ENCODE measurements at regions of chr22 and their contacts with region 1.

Region 1: DNA sequence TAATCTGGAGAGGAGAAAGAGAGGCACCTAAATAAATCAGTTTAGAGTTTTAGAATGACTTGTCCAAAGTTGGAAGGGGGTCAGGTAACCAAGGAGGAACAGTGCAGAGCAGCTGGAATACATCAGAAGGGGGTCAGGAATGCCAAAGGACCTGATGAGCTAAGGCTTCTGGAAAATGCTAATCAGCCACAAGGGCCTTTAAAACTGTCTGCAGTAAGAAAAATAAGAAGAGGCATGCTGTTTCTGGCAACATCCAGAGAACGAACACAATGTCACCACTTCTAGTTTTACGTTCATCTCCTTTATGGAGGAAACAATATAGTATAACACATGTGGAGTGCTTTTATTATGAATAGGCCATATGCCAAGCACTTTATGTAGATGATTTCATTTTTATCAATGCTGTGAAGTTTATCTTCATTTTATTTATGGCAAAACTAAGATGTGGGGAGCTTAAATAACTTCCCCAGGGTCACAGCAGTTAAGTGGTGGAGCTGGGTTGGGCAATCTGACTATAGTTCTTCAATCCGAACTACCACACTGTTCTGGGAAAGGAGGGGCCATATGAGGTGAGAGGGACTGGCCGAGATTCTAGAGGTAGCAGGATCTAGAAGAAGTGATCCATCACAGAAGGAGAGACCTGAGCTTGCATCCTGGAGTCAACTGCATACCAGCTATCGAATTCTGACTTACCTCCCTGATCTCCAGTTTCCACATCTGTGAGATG is 22.6 kb downstream of the ACO2 start:
- DNase-seq: no peak
- H3K4me3 ChIP-seq: no peak overlapping the region
- H3K27ac ChIP-seq: no peak overlapping the region
- H3K4me1 ChIP-seq: peaks cover 4 to 21% (median 14%) of the 10 kb centered on the region in 4 experiments; a peak in 6 of 7 replicates
- H3K27me3 ChIP-seq: no peaks in the 10 kb centered on the region
- CTCF ChIP-seq: no peak
- EP300 ChIP-seq: no peak
- POLR2A ChIP-seq: no peak
- RAD21 ChIP-seq: no peak

Region 2: DNA sequence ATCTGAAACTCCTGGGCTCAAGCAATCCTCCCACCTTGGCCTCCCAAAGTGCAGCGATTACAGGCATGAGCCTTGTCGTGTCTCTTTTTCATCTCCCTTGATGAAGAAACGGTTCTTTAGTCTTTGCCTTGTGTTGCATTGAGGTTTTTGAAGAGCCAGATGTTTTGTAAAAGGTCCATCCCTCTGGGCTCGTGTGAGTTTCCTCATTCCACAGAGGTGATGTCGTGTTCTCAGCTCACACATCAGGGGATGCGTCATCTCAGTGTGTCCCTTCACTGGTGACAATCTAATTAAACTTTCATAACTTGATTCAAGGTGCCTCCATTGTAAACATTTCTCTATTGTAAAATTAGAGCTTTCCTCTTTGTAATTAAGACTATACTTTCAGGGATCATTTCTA is 139.5 kb before region 1 on chr22:
- CTCF ChIA-PET with region 1: no interaction called
- POLR2A ChIA-PET with region 1: no interaction called
- DNase-seq: no peak
- H3K4me3 ChIP-seq: no peak overlapping the region
- H3K27ac ChIP-seq: no peak overlapping the region
- H3K4me1 ChIP-seq: no peaks in the 10 kb centered on the region
- H3K27me3 ChIP-seq: no peaks in the 10 kb centered on the region
- CTCF ChIP-seq: no peak
- EP300 ChIP-seq: no peak
- POLR2A ChIP-seq: no peak
- RAD21 ChIP-seq: no peak

Region 3: GRCh38 chr22:41425660-41426365 is 65.7 kb before region 1 on chr22:
- CTCF ChIA-PET with region 1: no interaction called
- POLR2A ChIA-PET with region 1: no interaction called
- DNase-seq: no peak
- H3K4me3 ChIP-seq: no peak overlapping the region
- H3K27ac ChIP-seq: no peak overlapping the region
- H3K4me1 ChIP-seq: no peaks in the 10 kb centered on the region; a peak in 1 of 7 replicates
- H3K27me3 ChIP-seq: no peaks in the 10 kb centered on the region
- CTCF ChIP-seq: no peak
- EP300 ChIP-seq: no peak
- POLR2A ChIP-seq: no peak
- RAD21 ChIP-seq: no peak

Region 4: DNA sequence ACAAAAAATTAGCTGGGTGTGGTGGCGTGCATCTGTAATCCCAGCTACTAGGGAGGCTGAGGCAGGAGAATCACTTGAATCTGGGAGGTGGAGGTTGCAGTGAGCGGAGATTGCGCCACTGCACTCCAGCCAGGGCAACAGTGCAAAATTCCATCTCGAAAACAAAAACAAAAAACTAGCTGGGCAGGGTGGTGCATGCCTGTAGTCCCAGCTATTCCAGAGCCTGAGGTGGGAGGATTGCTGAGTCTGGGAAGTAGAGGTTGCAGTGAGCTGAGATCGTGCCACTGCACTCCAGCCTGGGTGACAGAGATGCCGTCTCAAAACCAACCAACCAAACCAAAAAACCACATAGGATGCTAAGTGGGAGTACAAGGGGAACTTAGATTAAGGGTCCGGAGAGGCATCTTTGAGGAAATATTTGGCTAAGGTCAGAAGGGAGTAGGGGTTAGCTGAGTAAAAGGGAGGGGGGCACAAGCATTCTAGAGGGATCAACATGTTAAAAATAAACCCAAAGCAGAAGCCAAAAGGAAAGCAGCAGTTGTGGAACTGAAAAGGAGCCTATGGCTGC is 33.3 kb before region 1 on chr22:
- CTCF ChIA-PET with region 1: interaction called, 3 read pairs
- POLR2A ChIA-PET with region 1: interaction called, 11 read pairs
- DNase-seq: no peak
- H3K4me3 ChIP-seq: no peak overlapping the region
- H3K27ac ChIP-seq: no peak overlapping the region
- H3K4me1 ChIP-seq: no peaks in the 10 kb centered on the region
- H3K27me3 ChIP-seq: no peaks in the 10 kb centered on the region
- CTCF ChIP-seq: no peak
- EP300 ChIP-seq: no peak
- POLR2A ChIP-seq: no peak
- RAD21 ChIP-seq: no peak

Region 5: GRCh38 chr22:41479671-41480396 is 11.7 kb before region 1 on chr22:
- CTCF ChIA-PET with region 1: interaction called, 11 read pairs
- POLR2A ChIA-PET with region 1: interaction called, 10 read pairs
- DNase-seq: peak; percentile 21 to 61
- H3K4me3 ChIP-seq: peak overlapping the region in 2 of 4 experiments; percentile 0 to 11; a peak in 2 of 8 replicates
- H3K27ac ChIP-seq: peak overlapping the region; percentile 20; the same call in 1 of the 2 replicates
- H3K4me1 ChIP-seq: peaks cover 24 to 39% (median 26%) of the 10 kb centered on the region in 4 experiments
- H3K27me3 ChIP-seq: no peaks in the 10 kb centered on the region
- CTCF ChIP-seq: peak in 2 of 3 experiments; percentile 28 to 41; a peak in 2 of 4 replicates
- EP300 ChIP-seq: no peak
- POLR2A ChIP-seq: no peak
- RAD21 ChIP-seq: peak; percentile 17 to 21; a peak in 2 of 4 replicates

Region 6: DNA sequence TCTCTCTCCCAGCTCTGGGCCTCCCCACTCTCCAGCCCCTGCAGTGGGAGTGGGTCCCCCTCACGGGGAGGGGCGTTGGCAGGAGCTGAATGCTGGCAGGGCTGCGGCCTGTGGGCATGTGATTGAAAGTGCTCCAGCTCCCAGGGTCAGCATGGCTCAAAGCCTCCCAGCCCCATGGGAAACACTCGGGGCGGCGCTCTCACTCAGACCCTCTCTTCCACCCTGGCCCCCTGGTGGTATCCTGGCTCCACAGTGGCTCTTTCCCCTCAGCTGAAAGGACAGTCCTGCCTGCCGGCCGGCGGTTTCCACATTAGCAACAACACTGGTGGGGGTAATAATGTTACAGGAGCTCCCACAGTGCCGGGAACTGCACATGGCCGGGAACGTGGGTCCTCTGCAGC is 17.2 kb after region 1 on chr22:
- CTCF ChIA-PET with region 1: interaction called, 218 read pairs
- POLR2A ChIA-PET with region 1: interaction called, 5 read pairs
- DNase-seq: no peak
- H3K4me3 ChIP-seq: no peak overlapping the region
- H3K27ac ChIP-seq: no peak overlapping the region
- H3K4me1 ChIP-seq: peaks cover 4 to 15% (median 13%) of the 10 kb centered on the region in 4 experiments
- H3K27me3 ChIP-seq: no peaks in the 10 kb centered on the region
- CTCF ChIP-seq: peak in 1 of 3 experiments; percentile 9; a peak in 1 of 4 replicates
- EP300 ChIP-seq: no peak
- POLR2A ChIP-seq: no peak
- RAD21 ChIP-seq: no peak; a peak in 1 of 4 replicates

Region 7: DNA sequence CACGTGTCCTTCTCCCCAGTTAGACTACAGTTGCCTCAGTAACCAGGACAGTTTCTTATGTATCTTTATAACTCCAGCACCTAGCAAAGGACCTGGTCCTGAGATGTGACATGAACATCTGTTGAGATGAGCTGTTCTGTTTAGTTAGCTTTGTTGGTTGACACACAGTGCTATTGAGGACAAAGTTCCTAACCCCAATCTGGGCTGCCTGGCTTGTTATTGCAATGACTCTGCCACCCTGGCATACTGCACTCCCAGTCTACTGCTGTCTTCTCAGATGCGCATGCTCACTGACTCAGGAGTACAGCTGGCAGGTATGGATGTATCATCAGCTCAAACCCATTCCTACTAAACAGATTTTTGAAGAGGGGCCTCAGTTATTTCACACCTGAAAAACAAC is 121.9 kb after region 1 on chr22:
- CTCF ChIA-PET with region 1: no interaction called
- POLR2A ChIA-PET with region 1: no interaction called
- DNase-seq: no peak
- H3K4me3 ChIP-seq: no peak overlapping the region
- H3K27ac ChIP-seq: no peak overlapping the region
- H3K4me1 ChIP-seq: peaks cover 0 to 2% (median 0%) of the 10 kb centered on the region in 4 experiments; a peak in 1 of 7 replicates
- H3K27me3 ChIP-seq: no peaks in the 10 kb centered on the region
- CTCF ChIP-seq: no peak
- EP300 ChIP-seq: no peak
- POLR2A ChIP-seq: no peak
- RAD21 ChIP-seq: no peak